ENCODE measurements at regions of chr2 and their contacts with region 1.

Region 1: DNA sequence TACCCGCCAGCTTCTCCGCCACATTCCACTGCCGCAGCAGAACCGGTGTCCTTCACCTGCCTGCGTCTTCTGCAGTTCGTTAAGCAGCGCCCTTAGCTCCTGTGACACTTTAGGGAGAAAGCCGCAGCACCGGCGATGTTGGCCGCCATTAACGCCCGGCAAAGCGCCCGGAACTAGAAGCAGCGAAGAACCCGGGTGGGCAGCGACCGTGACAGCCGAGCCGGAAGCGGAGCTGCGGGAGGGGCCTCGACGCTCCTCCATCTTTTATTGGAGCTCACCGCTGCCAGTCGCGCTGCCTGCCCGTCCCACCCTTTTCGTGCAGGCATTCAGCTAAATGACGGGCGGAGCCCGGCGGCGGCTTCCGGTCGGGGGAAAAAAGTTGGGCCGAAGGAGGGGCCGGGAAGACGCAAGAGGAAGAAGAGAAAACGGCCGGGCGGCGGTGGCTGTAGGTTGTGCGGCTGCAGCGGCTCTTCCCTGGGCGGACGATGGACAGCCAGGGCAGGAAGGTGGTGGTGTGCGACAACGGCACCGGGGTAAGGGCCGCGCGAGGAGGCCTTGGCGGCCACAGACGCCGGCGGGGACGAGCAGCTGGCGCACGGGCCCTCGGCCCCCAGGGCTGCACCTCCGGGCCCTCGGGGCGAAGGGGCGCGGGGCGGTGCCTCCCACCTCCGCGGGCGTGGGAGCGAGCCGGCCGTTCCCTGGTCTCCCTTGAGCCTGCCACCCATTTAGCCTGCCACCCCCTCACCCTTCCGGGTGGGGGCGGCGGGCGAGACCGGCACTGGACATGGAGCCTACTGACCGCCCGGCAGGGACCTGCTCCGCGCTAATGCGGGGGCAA is at the start of gene ACTR2:
- DNase-seq: peak; percentile 93 to 97 (median 95)
- H3K4me3 ChIP-seq: peak within 1 kb of the TSS; percentile 96 to 97
- H3K4me3 Mint-ChIP-seq: peak within 1 kb of the TSS; percentile 97 to 100 (median 99)
- H3K27ac ChIP-seq: peak within 1 kb of the TSS; percentile 100
- H3K27ac Mint-ChIP-seq: peak within 1 kb of the TSS; percentile 99 to 100 (median 99)
- H3K4me1 ChIP-seq: peaks cover 50% of the 10 kb centered on the region
- H3K4me1 Mint-ChIP-seq: peaks cover 23 to 58% (median 35%) of the 10 kb centered on the region in 4 donors
- H3K27me3 ChIP-seq: no peaks in the 10 kb centered on the region
- H3K27me3 Mint-ChIP-seq: no peaks in the 10 kb centered on the region
- total RNA-seq, gene ACTR2: 298 to 312 TPM

Region 2: DNA sequence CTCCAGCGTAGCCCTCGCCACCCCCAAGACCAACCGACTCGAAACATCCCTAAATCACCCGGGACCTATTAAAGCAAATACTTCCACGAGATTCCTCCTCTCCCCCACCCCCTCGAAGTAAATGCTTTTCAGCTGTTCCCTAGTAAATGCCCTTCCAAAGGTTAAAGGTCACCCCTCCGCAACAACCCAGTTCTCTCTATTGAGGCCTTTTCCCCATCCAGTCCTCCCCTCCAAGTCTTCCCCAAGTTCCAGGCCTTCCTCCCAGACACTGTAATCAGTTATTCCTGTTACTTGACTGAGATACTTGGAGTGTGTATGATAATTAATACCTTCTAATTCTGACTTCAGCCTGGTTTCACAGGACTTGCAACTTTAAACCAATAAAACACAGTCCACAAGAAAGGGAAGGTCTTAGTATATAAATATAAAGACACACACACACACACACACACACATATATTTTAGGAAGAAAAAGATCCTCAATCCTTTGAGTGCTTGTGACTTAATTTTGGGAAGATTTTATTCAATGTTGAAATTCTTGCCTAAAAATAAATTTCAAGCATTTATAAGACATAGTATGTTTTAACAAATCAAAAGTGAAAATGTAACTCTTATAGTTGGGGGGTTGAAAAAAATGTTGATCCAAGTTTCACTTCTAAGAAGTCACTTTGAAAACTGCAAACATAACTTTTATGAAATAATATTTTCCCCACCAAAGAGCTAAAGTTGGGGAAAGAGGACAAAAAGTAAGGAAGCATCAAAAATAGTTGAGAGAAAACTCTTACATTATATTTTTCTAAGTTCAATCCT is 1207.7 kb before region 1 on chr2:
- CTCF ChIA-PET with region 1: no interaction called
- POLR2A ChIA-PET with region 1: no interaction called
- intact Hi-C with region 1: no loop called
- DNase-seq: peak in 3 of 5 donors; percentile 6 to 19 (median 11)
- H3K4me3 ChIP-seq: peak overlapping the region; percentile 51 to 58
- H3K4me3 Mint-ChIP-seq: peak overlapping the region; percentile 84 to 98 (median 90)
- H3K27ac ChIP-seq: peak overlapping the region; percentile 72
- H3K27ac Mint-ChIP-seq: peak overlapping the region; percentile 89 to 98 (median 95)
- H3K4me1 ChIP-seq: peaks cover 51% of the 10 kb centered on the region
- H3K4me1 Mint-ChIP-seq: peaks cover 29 to 51% (median 39%) of the 10 kb centered on the region in 4 donors
- H3K27me3 ChIP-seq: no peaks in the 10 kb centered on the region
- H3K27me3 Mint-ChIP-seq: no peaks in the 10 kb centered on the region

Region 3: GRCh38 chr2:64988420-64989125 is 239.1 kb before region 1 on chr2:
- CTCF ChIA-PET with region 1: no interaction called
- POLR2A ChIA-PET with region 1: interaction called, 4 read pairs
- intact Hi-C with region 1: loop called (anchors 1 kb)
- DNase-seq: peak in 4 of 5 donors; percentile 53 to 76 (median 60)
- H3K4me3 ChIP-seq: peak overlapping the region; percentile 52 to 56
- H3K4me3 Mint-ChIP-seq: peak overlapping the region; percentile 84 to 91 (median 89)
- H3K27ac ChIP-seq: peak overlapping the region; percentile 48
- H3K27ac Mint-ChIP-seq: peak overlapping the region; percentile 38 to 93 (median 71)
- H3K4me1 ChIP-seq: peaks cover 32% of the 10 kb centered on the region
- H3K4me1 Mint-ChIP-seq: peaks cover 16 to 44% (median 33%) of the 10 kb centered on the region in 4 donors
- H3K27me3 ChIP-seq: no peaks in the 10 kb centered on the region
- H3K27me3 Mint-ChIP-seq: no peaks in the 10 kb centered on the region

Region 4: GRCh38 chr2:65240657-65241056 is 13.0 kb after region 1 on chr2:
- CTCF ChIA-PET with region 1: interaction called, 3 read pairs
- POLR2A ChIA-PET with region 1: interaction called, 5 read pairs
- intact Hi-C with region 1: loop called (anchors 1 kb)
- DNase-seq: no peak
- H3K4me3 ChIP-seq: no peak overlapping the region
- H3K4me3 Mint-ChIP-seq: peak overlapping the region in 4 of 8 donors; percentile 4 to 54 (median 32)
- H3K27ac ChIP-seq: no peak overlapping the region
- H3K27ac Mint-ChIP-seq: peak overlapping the region in 3 of 7 donors; percentile 61 to 79 (median 77)
- H3K4me1 ChIP-seq: peaks cover 76% of the 10 kb centered on the region
- H3K4me1 Mint-ChIP-seq: peaks cover 27 to 68% (median 40%) of the 10 kb centered on the region in 4 donors
- H3K27me3 ChIP-seq: no peaks in the 10 kb centered on the region
- H3K27me3 Mint-ChIP-seq: no peaks in the 10 kb centered on the region

Region 5: GRCh38 chr2:65300761-65301711 is 73.4 kb after region 1 on chr2:
- CTCF ChIA-PET with region 1: no interaction called
- POLR2A ChIA-PET with region 1: interaction called, 7 read pairs
- intact Hi-C with region 1: loop called (anchors 5 kb)
- DNase-seq: peak; percentile 66 to 79 (median 72)
- H3K4me3 ChIP-seq: peak overlapping the region; percentile 26 to 27
- H3K4me3 Mint-ChIP-seq: peak overlapping the region; percentile 74 to 91 (median 82)
- H3K27ac ChIP-seq: no peak overlapping the region
- H3K27ac Mint-ChIP-seq: peak overlapping the region; percentile 73 to 94 (median 93)
- H3K4me1 ChIP-seq: peaks cover 36% of the 10 kb centered on the region
- H3K4me1 Mint-ChIP-seq: peaks cover 20 to 50% (median 34%) of the 10 kb centered on the region in 4 donors
- H3K27me3 ChIP-seq: no peaks in the 10 kb centered on the region
- H3K27me3 Mint-ChIP-seq: peaks cover 0 to 2% of the 10 kb centered on the region in 2 donors

Region 6: DNA sequence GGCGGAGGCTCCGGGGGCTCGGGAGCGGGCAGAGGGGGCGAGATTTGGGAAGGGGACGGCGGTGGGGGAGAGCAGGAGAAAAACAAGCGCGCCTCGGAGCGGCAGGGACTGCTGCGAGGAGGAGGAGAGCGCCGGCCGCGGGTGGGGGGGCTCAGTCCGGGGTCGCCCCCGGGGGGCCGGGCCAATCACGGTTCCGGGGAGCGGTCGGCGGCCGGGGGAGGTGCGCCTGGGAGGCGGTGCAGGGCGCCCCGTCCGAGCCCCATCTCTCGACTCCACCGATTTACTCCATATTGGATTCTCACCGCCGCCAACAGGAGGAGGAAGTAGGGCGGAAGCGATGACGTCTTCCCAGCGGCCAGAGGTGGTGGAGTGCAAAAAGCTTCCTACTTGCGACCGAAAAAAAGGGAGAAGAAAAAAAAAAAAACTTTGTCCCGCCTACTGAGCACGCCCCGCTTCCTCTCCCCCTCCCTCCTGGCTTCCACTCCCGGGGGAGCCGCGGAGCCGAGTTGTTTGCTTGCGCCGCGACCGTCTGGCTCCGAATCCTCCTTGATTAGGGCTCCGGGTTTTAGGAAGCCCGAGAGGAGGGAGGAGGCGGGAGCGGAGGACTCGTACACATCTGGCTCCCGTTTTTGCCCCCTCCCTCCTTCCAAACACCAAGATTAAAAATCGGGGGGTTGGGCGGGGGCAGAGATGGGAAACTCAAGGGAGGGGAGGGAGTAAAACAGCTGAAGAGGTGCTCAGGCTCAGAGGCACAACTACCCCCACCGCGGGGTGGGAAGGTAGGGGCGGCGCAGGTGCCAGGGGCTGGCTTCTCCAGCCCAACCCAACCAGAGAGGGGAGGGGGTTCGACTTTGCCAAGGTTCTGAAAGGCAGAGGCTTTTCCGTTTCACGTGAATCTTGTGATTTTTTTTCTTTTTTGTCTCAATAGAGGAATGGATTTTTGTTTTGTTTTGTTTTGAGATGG is 204.9 kb after region 1 on chr2 and contains the start of gene SPRED2:
- CTCF ChIA-PET with region 1: no interaction called
- POLR2A ChIA-PET with region 1: no interaction called
- intact Hi-C with region 1: loop called (anchors 2 kb)
- DNase-seq: peak; percentile 64 to 86 (median 67)
- H3K4me3 ChIP-seq: peak within 1 kb of the TSS; percentile 39 to 62
- H3K4me3 Mint-ChIP-seq: peak within 1 kb of the TSS; percentile 90 to 97 (median 91)
- H3K27ac ChIP-seq: peak within 1 kb of the TSS; percentile 34
- H3K27ac Mint-ChIP-seq: peak within 1 kb of the TSS; percentile 78 to 93 (median 87)
- H3K4me1 ChIP-seq: peaks cover 30% of the 10 kb centered on the region
- H3K4me1 Mint-ChIP-seq: peaks cover 10 to 40% (median 14%) of the 10 kb centered on the region in 4 donors
- H3K27me3 ChIP-seq: peaks cover 10% of the 10 kb centered on the region
- H3K27me3 Mint-ChIP-seq: peaks cover 11 to 29% of the 10 kb centered on the region in 2 donors
- total RNA-seq, gene SPRED2: 0.52 to 0.72 TPM

Measured in CD4-positive, alpha-beta memory T cell (primary cell).